ENCODE measurements at regions of chr1 and their contacts with region 1.

Region 1: DNA sequence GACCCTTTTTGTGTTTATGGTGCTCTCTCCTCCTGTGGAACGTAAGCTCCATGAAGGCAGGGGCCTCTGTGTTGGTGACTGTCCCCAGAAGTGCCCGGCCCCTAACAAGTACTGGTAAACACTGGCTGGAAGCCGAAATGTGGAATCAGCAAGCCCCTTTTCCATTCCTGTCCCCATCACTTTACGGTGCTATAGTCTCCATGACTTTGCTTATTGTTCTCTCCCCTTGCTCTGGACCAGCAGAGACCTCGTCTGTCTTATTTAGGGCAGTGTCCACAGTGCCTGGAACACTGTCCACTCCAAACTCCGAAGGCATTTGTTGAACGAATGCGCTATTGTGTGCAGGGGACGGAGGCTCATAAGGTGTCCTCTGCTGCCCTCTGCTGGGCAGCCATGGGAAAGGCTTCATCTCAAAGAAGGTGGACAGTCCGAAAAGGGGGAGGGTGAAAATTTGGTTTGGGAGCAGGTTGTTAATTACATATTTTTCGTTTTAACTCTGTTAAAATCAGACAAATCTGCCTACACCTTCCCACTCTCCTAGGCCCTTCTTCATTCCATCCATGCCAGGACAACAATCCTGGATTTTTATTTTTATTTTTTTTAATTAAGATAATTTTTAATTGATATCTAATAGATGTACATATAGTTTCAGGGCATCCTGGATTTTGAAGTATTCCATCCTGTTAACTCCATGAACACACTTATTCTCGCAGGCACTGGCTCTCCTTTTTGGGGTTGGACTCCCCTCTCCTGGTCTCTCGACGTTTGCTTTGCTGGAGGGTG is 115.6 kb downstream of the PGBD5 start:
- DNase-seq: peak; percentile 51 to 60 (median 57)
- H3K4me3 ChIP-seq: no peak overlapping the region
- H3K4me3 Mint-ChIP-seq: no peak overlapping the region
- H3K27ac ChIP-seq: no peak overlapping the region
- H3K27ac Mint-ChIP-seq: no peak overlapping the region
- H3K4me1 ChIP-seq: peaks cover 3% of the 10 kb centered on the region
- H3K4me1 Mint-ChIP-seq: peaks cover 0 to 6% (median 1%) of the 10 kb centered on the region in 4 donors
- H3K27me3 ChIP-seq: no peaks in the 10 kb centered on the region
- H3K27me3 Mint-ChIP-seq: peaks cover 4 to 7% of the 10 kb centered on the region in 2 donors

Region 2: GRCh38 chr1:229714964-229715603 is 595.5 kb before region 1 on chr1:
- CTCF ChIA-PET with region 1: interaction called, 15 read pairs
- POLR2A ChIA-PET with region 1: no interaction called
- intact Hi-C with region 1: loop called (anchors 1 kb)
- DNase-seq: peak in 4 of 5 donors; percentile 18 to 39 (median 26)
- H3K4me3 ChIP-seq: no peak overlapping the region
- H3K4me3 Mint-ChIP-seq: no peak overlapping the region
- H3K27ac ChIP-seq: no peak overlapping the region
- H3K27ac Mint-ChIP-seq: no peak overlapping the region
- H3K4me1 ChIP-seq: no peaks in the 10 kb centered on the region
- H3K4me1 Mint-ChIP-seq: no peaks in the 10 kb centered on the region
- H3K27me3 ChIP-seq: no peaks in the 10 kb centered on the region
- H3K27me3 Mint-ChIP-seq: peaks cover 2 to 5% of the 10 kb centered on the region in 2 donors

Region 3: DNA sequence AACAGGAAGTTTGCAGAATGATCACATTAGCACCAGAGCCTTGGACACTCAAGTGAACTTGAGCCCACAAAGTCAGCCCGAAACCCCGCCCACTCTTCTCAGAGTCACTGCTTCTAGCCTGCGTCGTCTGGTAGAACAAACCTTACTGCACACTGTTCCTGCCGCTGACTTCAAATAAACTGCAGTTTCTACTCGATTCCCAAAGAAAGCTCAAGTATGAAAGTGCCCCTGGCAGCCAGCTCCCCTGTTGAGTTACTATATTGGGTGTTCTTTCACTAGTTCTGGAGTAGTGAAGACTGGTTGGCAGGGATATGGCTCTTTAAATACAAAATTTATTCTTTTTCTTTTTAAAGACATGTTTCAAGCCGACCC is 78.8 kb before region 1 on chr1:
- CTCF ChIA-PET with region 1: no interaction called
- POLR2A ChIA-PET with region 1: no interaction called
- intact Hi-C with region 1: no loop called
- DNase-seq: no peak
- H3K4me3 ChIP-seq: no peak overlapping the region
- H3K4me3 Mint-ChIP-seq: peak overlapping the region in 1 of 8 donors; percentile 4
- H3K27ac ChIP-seq: no peak overlapping the region
- H3K27ac Mint-ChIP-seq: peak overlapping the region in 1 of 7 donors; percentile 51
- H3K4me1 ChIP-seq: peaks cover 4% of the 10 kb centered on the region
- H3K4me1 Mint-ChIP-seq: peaks cover 3 to 9% (median 8%) of the 10 kb centered on the region in 4 donors
- H3K27me3 ChIP-seq: no peaks in the 10 kb centered on the region
- H3K27me3 Mint-ChIP-seq: no peaks in the 10 kb centered on the region

Region 4: GRCh38 chr1:231139659-231140654 is 829.4 kb after region 1 on chr1:
- CTCF ChIA-PET with region 1: no interaction called
- POLR2A ChIA-PET with region 1: no interaction called
- intact Hi-C with region 1: no loop called
- DNase-seq: no peak
- H3K4me3 ChIP-seq: no peak overlapping the region
- H3K4me3 Mint-ChIP-seq: no peak overlapping the region
- H3K27ac ChIP-seq: no peak overlapping the region
- H3K27ac Mint-ChIP-seq: no peak overlapping the region
- H3K4me1 ChIP-seq: no peaks in the 10 kb centered on the region
- H3K4me1 Mint-ChIP-seq: no peaks in the 10 kb centered on the region
- H3K27me3 ChIP-seq: peaks cover 5% of the 10 kb centered on the region
- H3K27me3 Mint-ChIP-seq: peaks cover 22 to 23% of the 10 kb centered on the region in 2 donors